Esophagus squamous epithelium (tissue), 5 donors: ENCODE measurements at regions of chr13 and their contacts with region 1.

Region 1: DNA sequence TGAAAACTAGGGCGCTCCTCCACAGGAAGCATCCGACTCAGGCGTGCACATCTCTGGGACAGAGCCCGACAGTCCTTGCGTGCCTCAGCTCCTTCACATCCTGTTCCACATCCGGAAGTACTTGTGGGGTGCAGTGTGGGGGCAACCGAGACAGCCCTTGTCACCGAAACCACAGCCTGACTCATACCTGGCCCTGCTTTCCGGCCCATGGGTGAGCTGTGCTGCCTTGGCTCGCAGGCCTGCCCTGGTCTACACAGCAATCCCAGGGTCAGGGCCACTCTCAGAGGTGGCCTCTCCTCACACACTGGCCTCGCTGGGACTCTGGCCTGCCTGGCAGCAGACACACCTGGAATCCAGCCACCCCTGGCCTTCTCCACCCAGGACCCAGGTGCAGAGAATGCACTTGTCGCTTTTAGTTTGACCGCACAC is 100.4 kb downstream of the STK24 start:
- DNase-seq: no peak
- H3K4me3 ChIP-seq: peak overlapping the region in 1 of 4 donors; percentile 25
- H3K27ac ChIP-seq: peak overlapping the region; percentile 65 to 75 (median 68)
- H3K4me1 ChIP-seq: peaks cover 26 to 82% (median 34%) of the 10 kb centered on the region in 3 donors
- H3K27me3 ChIP-seq: no peaks in the 10 kb centered on the region
- CTCF ChIP-seq: no peak
- POLR2A ChIP-seq: no peak

Region 2: GRCh38 chr13:98576963-98577822 is 100.6 kb after region 1 on chr13 and contains the start of gene STK24:
- intact Hi-C with region 1: loop called (anchors 5 kb)
- DNase-seq: no peak
- H3K4me3 ChIP-seq: peak within 1 kb of the TSS; percentile 69 to 99 (median 98)
- H3K27ac ChIP-seq: peak within 1 kb of the TSS; percentile 96 to 100 (median 99)
- H3K4me1 ChIP-seq: peaks cover 30 to 62% (median 32%) of the 10 kb centered on the region in 3 donors
- H3K27me3 ChIP-seq: no peaks in the 10 kb centered on the region
- CTCF ChIP-seq: no peak
- POLR2A ChIP-seq: peak in 1 of 4 donors; percentile 54
- total RNA-seq, gene STK24: 119 to 156 (median 130) TPM